Esophagus muscularis mucosa (tissue), 4 donors: ENCODE measurements at regions of chr4 and their contacts with region 1.

Region 1: GRCh38 chr4:7719354-7720174 is 220.1 kb downstream of the AFAP1 start:
- DNase-seq: no peak
- H3K4me3 ChIP-seq: peak overlapping the region in 2 of 4 donors; percentile 28 to 38
- H3K27ac ChIP-seq: no peak overlapping the region
- H3K4me1 ChIP-seq: peaks cover 4 to 8% (median 7%) of the 10 kb centered on the region in 4 donors
- H3K27me3 ChIP-seq: peaks cover 0 to 6% (median 0%) of the 10 kb centered on the region in 4 donors
- CTCF ChIP-seq: peak; percentile 70 to 84 (median 80)
- EP300 ChIP-seq: no peak
- POLR2A ChIP-seq: no peak

Region 2: DNA sequence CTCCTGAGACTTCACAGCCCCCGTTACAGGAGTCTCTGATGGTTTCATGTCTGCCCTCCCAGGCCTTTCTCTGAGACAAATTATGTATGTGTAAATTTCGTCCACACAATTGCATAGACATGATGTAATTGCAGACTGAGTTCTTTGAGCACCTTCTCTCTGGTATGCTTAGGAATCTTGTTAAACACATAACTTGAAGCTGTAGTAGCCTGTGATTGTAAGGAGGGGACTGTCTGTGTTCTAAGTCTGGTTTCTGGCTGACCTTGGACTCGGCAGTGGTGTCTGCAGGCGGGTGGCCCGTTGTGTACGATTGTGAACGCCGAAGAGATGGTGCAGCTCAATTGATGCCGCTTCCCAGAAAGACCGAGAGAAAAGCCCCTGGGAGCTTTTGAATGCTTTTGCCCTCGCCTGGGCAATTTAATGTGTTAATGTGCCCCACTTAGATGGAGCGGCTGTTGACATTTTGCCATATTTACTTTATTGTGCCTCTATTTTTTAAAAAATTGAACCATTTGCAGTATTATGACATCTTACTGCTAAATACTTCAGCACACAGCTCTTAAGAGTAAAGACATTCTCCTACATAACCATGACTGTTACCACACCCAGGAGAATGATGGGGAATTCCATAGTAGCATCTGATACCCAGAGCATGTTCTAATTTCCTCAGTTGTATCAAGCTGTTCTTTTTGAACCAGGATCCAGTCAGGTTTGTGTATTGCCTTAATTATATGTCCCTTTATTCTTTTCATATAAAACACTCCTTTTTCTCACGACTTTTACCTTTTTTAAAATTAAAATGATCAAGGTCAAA is 734.7 kb before region 1 on chr4:
- intact Hi-C with region 1: no loop called
- DNase-seq: no peak
- H3K4me3 ChIP-seq: peak overlapping the region in 2 of 4 donors; percentile 72 to 90
- H3K27ac ChIP-seq: no peak overlapping the region
- H3K4me1 ChIP-seq: peaks cover 32 to 49% (median 45%) of the 10 kb centered on the region in 4 donors
- H3K27me3 ChIP-seq: no peaks in the 10 kb centered on the region
- CTCF ChIP-seq: no peak
- EP300 ChIP-seq: no peak
- POLR2A ChIP-seq: no peak

Region 3: GRCh38 chr4:7335344-7336069 is 384.1 kb before region 1 on chr4:
- intact Hi-C with region 1: loop called (anchors 10 kb)
- DNase-seq: no peak
- H3K4me3 ChIP-seq: no peak overlapping the region
- H3K27ac ChIP-seq: no peak overlapping the region
- H3K4me1 ChIP-seq: peaks cover 4 to 42% (median 25%) of the 10 kb centered on the region in 4 donors
- H3K27me3 ChIP-seq: no peaks in the 10 kb centered on the region
- CTCF ChIP-seq: peak; percentile 58 to 71 (median 63)
- EP300 ChIP-seq: no peak
- POLR2A ChIP-seq: no peak

Region 4: GRCh38 chr4:7462509-7462971 is 257.0 kb before region 1 on chr4:
- intact Hi-C with region 1: loop called (anchors 10 kb)
- DNase-seq: no peak
- H3K4me3 ChIP-seq: no peak overlapping the region
- H3K27ac ChIP-seq: peak overlapping the region in 2 of 4 donors; percentile 5 to 36
- H3K4me1 ChIP-seq: peaks cover 0 to 35% (median 29%) of the 10 kb centered on the region in 4 donors
- H3K27me3 ChIP-seq: no peaks in the 10 kb centered on the region
- CTCF ChIP-seq: peak; percentile 27 to 32 (median 29)
- EP300 ChIP-seq: no peak
- POLR2A ChIP-seq: no peak